ENCODE measurements at regions of chr6 and their contacts with region 1.

Region 1: GRCh38 chr6:129598244-129599187 is 111.5 kb downstream of the ARHGAP18 start:
- DNase-seq: peak; percentile 35
- ATAC-seq: peak; percentile 79
- H3K4me3 Mint-ChIP-seq: no peak overlapping the region
- H3K27ac Mint-ChIP-seq: no peak overlapping the region
- H3K4me1 Mint-ChIP-seq: peaks cover 5% of the 10 kb centered on the region
- H3K27me3 Mint-ChIP-seq: no peaks in the 10 kb centered on the region

Region 2: GRCh38 chr6:129490521-129491245 is 107.8 kb before region 1 on chr6:
- CTCF ChIA-PET with region 1: interaction called, 12 read pairs
- POLR2A ChIA-PET with region 1: no interaction called
- DNase-seq: peak; percentile 76
- ATAC-seq: peak; percentile 90
- H3K4me3 Mint-ChIP-seq: peak overlapping the region; percentile 70
- H3K27ac Mint-ChIP-seq: peak overlapping the region; percentile 94
- H3K4me1 Mint-ChIP-seq: peaks cover 45% of the 10 kb centered on the region
- H3K27me3 Mint-ChIP-seq: no peaks in the 10 kb centered on the region

Region 3: DNA sequence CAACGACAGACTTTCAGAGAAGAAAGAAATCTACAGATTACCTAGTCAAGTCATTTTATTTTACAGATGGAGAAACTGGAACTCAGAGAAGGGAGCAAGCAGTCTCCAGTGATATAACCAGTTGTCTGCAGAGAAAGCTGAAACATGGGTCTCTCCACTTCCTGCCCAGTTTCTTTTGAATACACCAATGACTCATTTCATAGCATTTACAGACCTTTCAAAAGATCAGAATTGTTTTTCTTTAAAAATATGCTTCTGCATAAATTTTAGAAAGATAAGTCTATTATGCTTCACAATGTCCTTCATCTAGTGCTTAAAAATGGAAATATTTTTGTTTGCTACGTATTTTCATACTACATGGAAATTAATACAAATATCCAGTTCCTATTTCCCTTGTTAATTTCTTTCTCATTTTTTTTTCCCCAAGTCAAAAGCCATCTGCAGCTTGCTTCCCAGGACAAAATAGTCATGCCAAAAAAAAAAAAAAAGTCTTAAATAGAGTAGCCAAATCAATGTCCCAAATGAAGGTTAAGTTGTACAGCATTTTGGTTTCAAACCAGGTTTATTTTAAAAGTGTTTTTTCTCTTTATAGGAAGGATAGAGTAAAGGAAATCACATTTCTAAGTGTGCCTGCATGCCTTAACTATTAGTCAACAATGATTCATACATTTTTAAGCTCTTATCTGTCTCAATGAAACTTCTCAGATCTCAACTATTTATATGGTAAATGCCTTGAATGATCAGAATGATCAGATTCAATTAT is 74.5 kb after region 1 on chr6:
- CTCF ChIA-PET with region 1: interaction called, 14 read pairs
- POLR2A ChIA-PET with region 1: no interaction called
- DNase-seq: peak; percentile 53
- ATAC-seq: peak; percentile 71
- H3K4me3 Mint-ChIP-seq: peak overlapping the region; percentile 68
- H3K27ac Mint-ChIP-seq: peak overlapping the region; percentile 97
- H3K4me1 Mint-ChIP-seq: peaks cover 47% of the 10 kb centered on the region
- H3K27me3 Mint-ChIP-seq: no peaks in the 10 kb centered on the region

Region 4: GRCh38 chr6:129719692-129720091 is 121.2 kb after region 1 on chr6:
- CTCF ChIA-PET with region 1: interaction called, 51 read pairs
- POLR2A ChIA-PET with region 1: no interaction called
- DNase-seq: no peak
- ATAC-seq: no peak
- H3K4me3 Mint-ChIP-seq: no peak overlapping the region
- H3K27ac Mint-ChIP-seq: no peak overlapping the region
- H3K4me1 Mint-ChIP-seq: peaks cover 6% of the 10 kb centered on the region
- H3K27me3 Mint-ChIP-seq: no peaks in the 10 kb centered on the region

Region 5: DNA sequence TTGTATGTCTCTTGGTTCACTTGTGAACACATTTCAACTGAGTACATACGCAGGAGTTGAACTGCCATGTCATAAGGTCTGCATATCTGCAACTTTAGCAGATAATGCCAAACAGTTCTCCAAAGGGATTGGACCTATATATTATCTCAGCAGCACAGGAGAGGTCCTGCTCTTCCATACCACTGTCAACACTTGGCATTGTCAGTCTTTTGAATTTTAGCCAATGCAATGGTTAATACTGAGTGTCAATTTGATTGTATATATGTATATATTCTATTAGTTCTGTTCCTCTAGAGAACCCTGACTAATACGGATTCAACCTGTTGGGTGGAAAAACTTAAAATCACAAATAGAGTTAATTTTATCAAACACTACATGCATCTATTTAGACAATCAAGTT is 137.6 kb after region 1 on chr6:
- CTCF ChIA-PET with region 1: interaction called, 152 read pairs
- POLR2A ChIA-PET with region 1: no interaction called
- DNase-seq: no peak
- ATAC-seq: no peak
- H3K4me3 Mint-ChIP-seq: no peak overlapping the region
- H3K27ac Mint-ChIP-seq: no peak overlapping the region
- H3K4me1 Mint-ChIP-seq: peaks cover 2% of the 10 kb centered on the region
- H3K27me3 Mint-ChIP-seq: peaks cover 2% of the 10 kb centered on the region

Region 6: DNA sequence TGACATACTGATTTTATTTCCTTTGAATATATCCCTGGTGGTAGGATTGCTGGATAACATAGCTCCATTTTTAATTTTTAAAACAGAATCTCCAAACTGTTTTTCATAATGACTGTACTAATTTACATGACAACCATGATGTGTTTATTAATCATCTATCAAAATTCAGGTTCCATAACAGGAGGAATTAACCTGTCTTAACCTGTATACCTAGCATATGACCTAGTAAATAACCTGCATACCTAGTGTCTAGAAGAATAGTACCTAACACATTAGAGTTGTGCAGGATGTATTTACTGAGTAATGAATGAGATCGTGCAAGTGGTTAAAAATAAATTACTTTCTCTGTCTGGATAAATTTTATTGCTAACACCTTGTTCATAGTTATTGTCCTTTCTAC is 157.3 kb after region 1 on chr6:
- CTCF ChIA-PET with region 1: interaction called, 14 read pairs
- POLR2A ChIA-PET with region 1: no interaction called
- DNase-seq: no peak
- ATAC-seq: no peak
- H3K4me3 Mint-ChIP-seq: no peak overlapping the region
- H3K27ac Mint-ChIP-seq: no peak overlapping the region
- H3K4me1 Mint-ChIP-seq: peaks cover 13% of the 10 kb centered on the region
- H3K27me3 Mint-ChIP-seq: peaks cover 5% of the 10 kb centered on the region

Region 7: GRCh38 chr6:129774697-129775447 is 176.4 kb after region 1 on chr6:
- CTCF ChIA-PET with region 1: interaction called, 10 read pairs
- POLR2A ChIA-PET with region 1: no interaction called
- DNase-seq: peak; percentile 64
- ATAC-seq: peak; percentile 36
- H3K4me3 Mint-ChIP-seq: no peak overlapping the region
- H3K27ac Mint-ChIP-seq: no peak overlapping the region
- H3K4me1 Mint-ChIP-seq: peaks cover 8% of the 10 kb centered on the region
- H3K27me3 Mint-ChIP-seq: peaks cover 16% of the 10 kb centered on the region

Region 8: GRCh38 chr6:129946439-129947145 is 348.1 kb after region 1 on chr6:
- CTCF ChIA-PET with region 1: no interaction called
- POLR2A ChIA-PET with region 1: no interaction called
- DNase-seq: no peak
- ATAC-seq: no peak
- H3K4me3 Mint-ChIP-seq: no peak overlapping the region
- H3K27ac Mint-ChIP-seq: no peak overlapping the region
- H3K4me1 Mint-ChIP-seq: no peaks in the 10 kb centered on the region
- H3K27me3 Mint-ChIP-seq: peaks cover 24% of the 10 kb centered on the region